Astrocyte of the cerebellum (primary cell): ENCODE measurements at regions of chr10 and their contacts with region 1.

Region 1: DNA sequence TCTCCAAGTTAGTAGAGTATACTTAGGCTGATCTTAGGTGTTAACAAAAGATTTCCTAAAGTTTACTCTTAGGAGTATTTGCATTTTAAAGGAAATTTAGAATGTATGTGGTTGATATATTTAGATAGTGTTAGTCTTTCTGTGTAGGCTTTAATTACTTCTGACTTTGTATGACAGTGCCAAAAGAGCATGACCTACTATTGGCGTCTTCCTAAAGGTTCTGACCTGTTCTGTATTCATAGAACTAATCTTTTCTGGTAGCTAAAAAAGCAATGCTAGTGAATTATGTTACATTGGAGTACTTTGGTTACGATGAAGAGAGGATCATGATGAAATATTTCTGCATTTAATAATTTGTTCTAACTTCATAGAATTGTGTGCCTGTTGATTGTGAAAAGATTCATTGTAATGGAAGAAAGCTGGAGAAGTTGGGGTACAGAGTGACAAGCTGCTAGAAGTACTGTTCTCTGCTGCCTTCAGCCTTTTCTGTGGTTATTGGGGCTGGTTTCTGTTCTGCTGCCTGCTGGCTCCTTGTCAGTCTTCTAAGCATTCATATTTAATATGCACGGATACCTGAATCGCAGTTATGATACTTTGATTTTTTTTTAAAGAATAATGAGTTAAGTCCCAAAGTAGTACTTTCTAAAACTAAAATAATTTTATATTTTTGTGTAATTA is 13.2 kb downstream of the WAC start:
- DNase-seq: no peak
- H3K4me3 ChIP-seq: no peak overlapping the region
- CTCF ChIP-seq: no peak

Region 2: DNA sequence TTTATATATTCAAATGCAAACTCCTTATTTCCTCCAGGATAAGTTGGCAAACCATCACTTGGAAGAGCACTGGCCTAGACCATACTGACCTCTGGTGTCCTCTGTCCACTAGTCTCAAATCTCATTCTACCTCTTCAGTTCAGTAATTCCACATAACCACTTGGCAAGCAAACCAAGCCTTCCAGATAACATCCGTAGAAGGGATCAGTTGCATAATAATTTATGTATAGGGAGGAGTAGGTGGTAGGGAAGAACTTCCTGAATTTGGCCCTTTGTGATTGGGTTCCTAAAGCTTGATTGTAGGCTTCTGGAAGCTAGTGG is 41.8 kb after region 1 on chr10:
- in situ Hi-C with region 1: loop called (anchors 5 kb)
- DNase-seq: peak; percentile 38
- H3K4me3 ChIP-seq: no peak overlapping the region
- CTCF ChIP-seq: no peak

Region 3: GRCh38 chr10:28984431-28984830 is 438.3 kb after region 1 on chr10:
- in situ Hi-C with region 1: no loop called
- DNase-seq: peak; percentile 65
- H3K4me3 ChIP-seq: no peak overlapping the region
- CTCF ChIP-seq: no peak